ENCODE measurements at regions of chr2 and their contacts with region 1.

Region 1: DNA sequence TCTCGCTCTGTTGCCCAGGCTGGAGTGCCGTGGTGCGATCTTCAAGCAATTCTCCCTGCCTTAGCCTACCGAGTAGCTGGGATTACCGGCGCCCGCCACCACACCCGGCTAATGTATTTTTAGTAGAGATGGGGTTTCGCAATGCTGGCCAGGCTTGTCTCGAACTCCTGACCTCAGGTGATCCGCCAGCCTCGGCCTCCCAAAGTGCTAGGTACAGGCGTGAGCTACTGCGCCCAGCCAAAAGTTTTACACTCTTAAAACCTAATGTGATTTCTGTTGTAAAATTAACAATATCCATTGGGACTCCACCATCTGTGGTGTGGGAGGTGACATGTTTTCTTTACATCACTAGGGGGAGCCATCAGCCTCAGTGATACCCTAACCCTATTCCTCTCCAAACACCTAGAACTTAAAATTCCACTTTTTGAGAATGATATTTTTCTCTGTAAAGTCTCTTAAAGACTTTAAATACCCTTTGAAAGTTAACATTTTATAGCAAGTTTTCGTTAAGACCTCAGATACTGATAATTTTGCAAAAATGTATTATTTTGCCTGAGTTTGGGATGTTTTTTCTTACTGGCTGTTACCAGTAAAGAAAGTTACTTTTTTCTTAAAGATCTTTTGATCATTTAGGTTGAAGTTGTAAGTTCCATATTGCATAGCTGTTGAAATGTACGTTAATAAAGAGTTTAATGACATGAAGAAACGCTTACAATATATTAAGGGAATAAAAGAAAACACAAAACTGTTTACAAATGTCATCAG is 11.6 kb upstream of the EIF2AK2 start:
- DNase-seq: peak; percentile 59
- H3K4me3 Mint-ChIP-seq: no peak overlapping the region
- H3K27ac Mint-ChIP-seq: no peak overlapping the region
- H3K4me1 Mint-ChIP-seq: no peaks in the 10 kb centered on the region
- H3K27me3 Mint-ChIP-seq: no peaks in the 10 kb centered on the region
- CTCF ChIP-seq: peak; percentile 65

Region 2: DNA sequence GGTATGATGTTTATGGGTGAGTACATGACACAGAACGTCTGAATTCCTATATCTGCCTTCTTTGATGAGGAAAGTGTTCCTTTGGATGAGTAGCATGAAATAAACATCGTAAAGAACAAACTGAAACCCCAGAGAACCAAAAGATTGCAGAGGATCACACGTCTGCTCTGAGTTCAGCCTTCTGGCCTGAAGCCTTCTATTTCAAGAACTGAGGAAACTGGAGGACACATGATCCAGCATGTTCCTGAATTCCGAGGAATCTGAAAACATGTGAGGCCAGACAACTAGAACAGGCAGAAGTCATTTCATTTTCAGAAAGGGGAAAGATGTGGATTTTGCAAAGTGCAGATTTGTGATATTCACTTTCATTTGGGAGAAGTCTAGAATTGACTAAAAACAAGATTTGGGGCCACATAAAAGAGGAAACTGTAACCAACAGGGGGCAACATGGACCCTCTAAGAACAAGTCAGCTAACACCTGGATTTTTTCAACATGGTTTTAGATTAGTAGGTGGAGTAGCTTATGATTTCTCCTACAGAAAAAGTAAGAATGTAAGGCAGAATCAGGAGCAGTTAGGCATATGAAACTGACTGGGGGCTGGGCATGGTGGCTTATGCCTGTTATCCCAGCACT is 11.7 kb after region 1 on chr2:
- CTCF ChIA-PET with region 1: interaction called, 20 read pairs
- POLR2A ChIA-PET with region 1: interaction called, 4 read pairs
- intact Hi-C with region 1: no loop called
- DNase-seq: no peak
- H3K4me3 Mint-ChIP-seq: no peak overlapping the region
- H3K27ac Mint-ChIP-seq: peak overlapping the region; percentile 47
- H3K4me1 Mint-ChIP-seq: peaks cover 11% of the 10 kb centered on the region
- H3K27me3 Mint-ChIP-seq: no peaks in the 10 kb centered on the region
- CTCF ChIP-seq: no peak

Region 3: GRCh38 chr2:37189452-37190153 is 21.2 kb after region 1 on chr2:
- CTCF ChIA-PET with region 1: interaction called, 32 read pairs
- POLR2A ChIA-PET with region 1: interaction called, 4 read pairs
- intact Hi-C with region 1: no loop called
- DNase-seq: peak; percentile 95
- H3K4me3 Mint-ChIP-seq: no peak overlapping the region
- H3K27ac Mint-ChIP-seq: peak overlapping the region; percentile 68
- H3K4me1 Mint-ChIP-seq: peaks cover 14% of the 10 kb centered on the region
- H3K27me3 Mint-ChIP-seq: no peaks in the 10 kb centered on the region
- CTCF ChIP-seq: no peak

Region 4: DNA sequence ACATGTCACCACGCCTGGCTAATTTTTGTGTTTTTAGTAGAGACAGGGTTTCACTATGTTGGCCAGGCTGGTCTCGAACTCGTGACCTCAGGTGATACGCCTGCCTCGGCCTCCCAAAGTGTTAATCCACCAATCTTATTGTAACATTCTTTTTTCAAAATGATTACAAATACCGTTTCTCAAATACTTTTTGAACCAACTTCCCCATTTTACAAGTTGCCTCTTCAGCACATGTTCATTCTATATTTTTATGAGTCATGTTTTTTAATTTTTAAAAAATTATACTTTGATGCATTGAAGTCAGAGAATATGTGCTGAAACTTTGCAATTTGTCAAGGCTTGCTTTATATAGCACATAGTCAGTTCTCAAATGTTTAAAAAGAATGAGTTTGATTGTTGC is 234.2 kb after region 1 on chr2:
- CTCF ChIA-PET with region 1: no interaction called
- POLR2A ChIA-PET with region 1: no interaction called
- intact Hi-C with region 1: no loop called
- DNase-seq: no peak
- H3K4me3 Mint-ChIP-seq: no peak overlapping the region
- H3K27ac Mint-ChIP-seq: no peak overlapping the region
- H3K4me1 Mint-ChIP-seq: no peaks in the 10 kb centered on the region
- H3K27me3 Mint-ChIP-seq: no peaks in the 10 kb centered on the region
- CTCF ChIP-seq: no peak

Measured in MCF 10A (cell line).